WTC11 (cell line): ENCODE measurements at regions of chr17 and their contacts with region 1.

Region 1: GRCh38 chr17:75109407-75110233 is at the start of gene ARMC7:
- DNase-seq: peak; percentile 95
- ATAC-seq: peak; percentile 68
- H3K4me3 Mint-ChIP-seq: peak within 1 kb of the TSS; percentile 90
- H3K27ac Mint-ChIP-seq: peak within 1 kb of the TSS; percentile 94
- H3K4me1 Mint-ChIP-seq: peaks cover 25% of the 10 kb centered on the region
- H3K27me3 Mint-ChIP-seq: no peaks in the 10 kb centered on the region
- CTCF ChIP-seq: no peak
- total RNA-seq, gene ARMC7: 13.2 to 15.9 TPM (median 14.8 TPM) in 3 replicates

Region 2: DNA sequence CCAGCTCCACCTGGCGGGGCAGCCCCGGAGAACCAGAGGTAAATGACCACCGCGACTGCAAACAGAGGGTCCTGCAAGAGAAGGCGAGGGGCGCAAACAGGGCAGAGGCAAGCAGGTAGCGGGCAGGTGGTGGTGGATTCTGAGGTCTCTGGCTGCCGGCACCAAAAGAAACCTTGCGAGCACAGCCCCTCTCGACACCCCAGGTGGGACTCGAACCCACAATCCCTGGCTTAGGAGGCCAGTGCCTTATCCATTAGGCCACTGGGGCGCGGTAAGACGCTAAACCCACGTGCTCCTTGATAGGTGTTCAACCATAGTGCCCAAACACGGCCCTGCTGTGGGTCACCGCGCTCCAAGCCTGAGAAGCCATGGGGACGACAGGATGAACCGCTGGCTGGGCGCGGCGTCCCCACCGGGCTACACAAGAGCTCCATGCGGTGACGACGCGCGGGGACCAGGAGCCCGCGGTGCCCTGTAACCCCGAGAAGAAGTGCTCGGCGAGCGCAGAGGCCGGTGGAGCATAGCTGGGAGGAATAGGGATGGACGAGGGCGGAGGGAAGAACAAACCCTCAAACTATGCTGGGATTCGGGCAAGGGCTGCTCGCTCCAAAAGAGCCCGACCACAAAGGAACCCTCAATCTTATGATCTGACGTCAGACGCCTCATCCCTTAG is 75.2 kb before region 1 on chr17:
- CTCF ChIA-PET with region 1: interaction called, 10 read pairs
- POLR2A ChIA-PET with region 1: no interaction called
- DNase-seq: peak; percentile 96
- ATAC-seq: peak; percentile 42
- H3K4me3 Mint-ChIP-seq: peak overlapping the region; percentile 99
- H3K27ac Mint-ChIP-seq: peak overlapping the region; percentile 94
- H3K4me1 Mint-ChIP-seq: peaks cover 26% of the 10 kb centered on the region
- H3K27me3 Mint-ChIP-seq: peaks cover 26% of the 10 kb centered on the region
- CTCF ChIP-seq: no peak

Region 3: GRCh38 chr17:75069783-75070182 is 39.8 kb before region 1 on chr17:
- CTCF ChIA-PET with region 1: interaction called, 21 read pairs
- POLR2A ChIA-PET with region 1: interaction called, 3 read pairs
- DNase-seq: no peak
- ATAC-seq: no peak
- H3K4me3 Mint-ChIP-seq: no peak overlapping the region
- H3K27ac Mint-ChIP-seq: 0 out of 2 replicates have a peak overlapping the region, but pooled peaks have one; percentile 49
- H3K4me1 Mint-ChIP-seq: no peaks in the 10 kb centered on the region
- H3K27me3 Mint-ChIP-seq: no peaks in the 10 kb centered on the region
- CTCF ChIP-seq: no peak

Region 4: GRCh38 chr17:75096082-75096625 is 13.5 kb before region 1 on chr17:
- CTCF ChIA-PET with region 1: interaction called, 18 read pairs
- POLR2A ChIA-PET with region 1: interaction called, 4 read pairs
- DNase-seq: no peak
- ATAC-seq: peak; percentile 19
- H3K4me3 Mint-ChIP-seq: no peak overlapping the region
- H3K27ac Mint-ChIP-seq: peak overlapping the region; percentile 84
- H3K4me1 Mint-ChIP-seq: peaks cover 21% of the 10 kb centered on the region
- H3K27me3 Mint-ChIP-seq: no peaks in the 10 kb centered on the region
- CTCF ChIP-seq: no peak

Region 5: DNA sequence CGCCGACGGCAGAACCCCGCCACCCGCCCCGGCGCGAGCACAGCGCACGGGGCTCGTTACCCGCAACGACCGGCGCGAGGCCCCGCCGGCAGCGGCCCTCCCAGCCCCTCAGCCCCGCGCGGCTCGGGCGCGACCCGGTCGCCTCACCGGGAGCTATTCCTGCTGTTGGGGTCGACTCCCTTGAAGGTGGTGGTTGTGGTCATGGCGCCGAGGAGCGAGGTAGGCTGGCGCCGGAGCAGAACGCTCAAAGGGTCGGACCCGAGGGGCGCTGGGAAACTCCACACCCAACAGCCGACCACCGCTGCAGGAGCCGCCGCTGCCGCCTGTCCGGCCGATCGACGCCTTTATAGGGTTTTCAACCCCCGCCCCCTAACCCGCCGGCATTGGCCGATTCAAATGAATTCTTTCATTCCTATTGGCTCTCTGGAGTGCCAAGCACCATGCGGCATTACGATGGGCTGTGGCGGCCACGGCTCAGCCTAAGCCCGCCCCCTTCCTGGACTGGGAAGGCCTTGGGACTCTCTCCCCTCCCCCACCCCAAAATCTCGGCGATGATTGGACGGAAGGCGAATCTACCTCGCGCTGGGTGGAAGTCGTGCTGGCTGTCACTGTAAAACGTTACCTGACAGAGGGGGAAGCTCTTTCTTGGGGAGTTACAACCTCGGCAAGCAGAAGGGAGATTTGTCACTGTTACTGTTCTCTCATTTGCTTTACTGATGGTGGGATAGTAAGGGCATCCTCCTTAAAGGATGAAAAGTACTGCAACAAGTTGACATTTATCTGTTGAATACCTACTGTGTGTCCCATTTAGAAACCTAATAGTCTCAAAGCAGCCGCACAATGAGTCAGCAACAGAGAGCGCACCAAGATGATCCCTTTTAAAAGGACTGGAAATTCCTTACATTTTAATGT is 44.8 kb after region 1 on chr17 and contains the start of gene JPT1:
- CTCF ChIA-PET with region 1: interaction called, 11 read pairs
- POLR2A ChIA-PET with region 1: interaction called, 5 read pairs
- DNase-seq: peak; percentile 99
- ATAC-seq: peak; percentile 96
- H3K4me3 Mint-ChIP-seq: peak within 1 kb of the TSS; percentile 97
- H3K27ac Mint-ChIP-seq: peak within 1 kb of the TSS; percentile 94
- H3K4me1 Mint-ChIP-seq: peaks cover 47% of the 10 kb centered on the region
- H3K27me3 Mint-ChIP-seq: peaks cover 3% of the 10 kb centered on the region; the same call in 1 of the 2 replicates
- CTCF ChIP-seq: no peak
- total RNA-seq, gene JPT1: 289 to 341 TPM (median 300 TPM) in 3 replicates

Region 6: DNA sequence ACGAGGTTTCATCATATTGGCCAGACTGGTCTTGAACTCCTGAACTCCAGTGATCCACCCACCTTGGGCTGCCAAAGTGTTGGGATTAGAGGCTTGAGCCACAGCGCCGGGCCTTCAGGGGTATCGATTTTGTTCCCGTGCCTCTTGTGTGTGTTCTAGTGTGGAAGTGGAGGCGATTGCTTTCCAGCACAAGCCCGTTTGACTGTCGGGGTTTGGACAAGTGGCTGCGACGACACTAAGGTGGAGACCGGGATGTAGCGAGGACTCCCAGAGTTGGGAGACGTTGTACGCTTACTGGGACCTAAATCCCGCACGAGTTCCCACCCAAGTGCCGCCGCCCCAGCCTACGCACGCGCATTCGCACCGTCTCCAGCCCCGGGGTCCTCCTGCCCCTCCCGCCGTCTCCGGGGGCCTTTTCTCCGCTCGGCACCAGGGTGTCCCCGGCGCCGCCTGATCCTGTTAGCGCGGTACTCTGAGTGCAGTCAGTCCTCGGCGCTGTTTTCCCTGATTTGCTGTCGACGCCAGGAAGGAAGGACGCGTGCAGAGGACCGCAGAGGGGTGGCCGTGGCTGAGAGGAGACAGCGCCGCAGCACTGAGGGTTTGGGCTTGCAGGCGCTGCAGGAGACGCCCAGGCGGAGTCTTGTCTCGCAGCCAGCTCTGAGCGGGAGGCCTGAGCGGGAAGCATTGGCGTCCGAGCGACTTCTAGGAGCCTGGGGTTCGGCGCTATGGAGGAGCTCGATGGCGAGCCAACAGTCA is 95.6 kb after region 1 on chr17 and contains the start of gene NUP85:
- CTCF ChIA-PET with region 1: interaction called, 79 read pairs
- POLR2A ChIA-PET with region 1: interaction called, 6 read pairs
- DNase-seq: peak; percentile 95
- ATAC-seq: peak; percentile 89
- H3K4me3 Mint-ChIP-seq: peak within 1 kb of the TSS; percentile 92
- H3K27ac Mint-ChIP-seq: peak within 1 kb of the TSS; percentile 100
- H3K4me1 Mint-ChIP-seq: peaks cover 14% of the 10 kb centered on the region
- H3K27me3 Mint-ChIP-seq: no peaks in the 10 kb centered on the region
- CTCF ChIP-seq: no peak
- total RNA-seq, gene NUP85: 89.7 to 109 TPM (median 95.1 TPM) in 3 replicates